ENCODE measurements at regions of chr14 and their contacts with region 1.

Region 1: DNA sequence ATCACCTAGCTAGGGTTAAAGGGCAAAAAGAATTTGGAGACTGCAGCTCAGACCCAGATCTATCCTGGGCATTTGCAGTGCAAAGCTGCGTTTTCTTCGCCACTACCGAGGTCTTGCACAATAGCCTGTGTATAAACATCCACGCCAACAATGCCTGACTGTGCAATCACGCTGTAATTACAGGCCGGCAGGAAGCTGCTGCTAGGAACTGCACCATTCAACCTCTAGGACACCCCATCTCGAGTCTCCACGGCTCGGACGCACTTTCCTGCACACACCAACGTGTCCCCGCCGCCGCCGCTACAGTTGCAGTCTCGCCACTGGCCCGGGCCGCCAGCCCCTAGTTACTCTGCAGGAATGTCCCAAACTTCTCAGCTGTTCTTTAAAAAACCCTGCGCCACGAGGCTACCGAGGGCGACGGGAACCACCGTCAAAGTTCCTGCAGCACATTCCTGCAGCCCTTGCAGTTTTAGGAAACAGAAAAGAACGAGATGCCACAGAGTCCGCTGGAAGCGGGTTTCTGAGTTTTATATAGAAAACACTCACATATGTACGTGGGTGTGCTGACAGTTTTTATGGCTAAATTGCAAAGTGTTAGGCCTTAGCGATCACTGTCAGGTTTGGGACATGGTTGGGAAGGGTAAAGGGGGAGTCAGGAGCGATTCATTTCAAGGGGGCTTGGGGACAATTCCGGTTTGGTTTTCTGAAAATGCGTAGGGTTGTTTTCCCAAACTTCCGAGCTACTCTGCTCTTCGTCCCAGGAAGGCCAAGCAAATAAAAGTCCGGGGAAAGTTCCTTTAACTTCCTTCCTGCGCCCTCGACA is 65.5 kb upstream of the PTGR2 start:
- DNase-seq: peak; percentile 90

Region 2: DNA sequence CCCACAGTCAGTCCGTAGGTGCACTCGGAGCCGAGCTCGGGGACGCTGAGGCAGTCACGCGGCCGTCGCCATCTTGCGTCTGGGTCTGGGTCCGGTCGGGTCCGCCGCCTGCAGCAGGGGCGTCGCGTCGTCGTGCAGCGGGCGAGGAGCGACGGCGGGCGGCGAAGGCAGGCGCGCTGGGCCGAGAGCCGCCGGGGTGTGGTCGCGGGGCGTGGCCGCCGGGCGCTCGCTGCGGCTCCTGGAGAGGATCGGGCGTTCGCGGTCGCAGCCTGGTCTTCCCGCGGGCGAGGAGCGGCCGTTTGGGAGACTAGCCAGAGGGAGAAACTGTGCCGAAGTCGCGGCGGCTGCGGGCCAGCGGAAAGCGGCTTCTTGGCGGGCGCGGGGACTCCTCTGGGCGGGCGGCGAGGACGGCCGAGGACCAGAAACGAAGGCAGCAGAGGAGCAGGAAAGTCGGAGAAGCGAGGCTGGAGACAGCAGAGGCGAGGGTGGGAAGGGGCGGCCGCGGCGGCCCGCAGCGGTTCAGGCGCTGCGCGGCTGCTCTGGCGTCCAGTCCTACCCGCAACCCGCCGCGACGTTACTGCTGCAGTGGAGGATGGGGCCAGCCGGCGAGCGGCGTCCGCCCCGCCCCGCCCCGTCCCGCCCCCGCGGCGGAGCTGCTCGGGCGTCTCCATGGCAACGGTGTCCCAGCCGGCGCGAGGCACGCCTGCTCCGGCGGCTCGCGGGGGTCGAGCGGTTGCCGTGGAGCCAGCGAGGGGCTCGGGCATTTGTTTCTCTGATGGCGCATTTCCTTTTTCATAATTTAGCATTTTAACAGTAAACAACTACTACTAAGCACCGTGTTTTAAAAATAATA is 72.1 kb before region 1 on chr14 and contains the start of gene PNMA1:
- intact Hi-C with region 1: loop called (anchors 5 kb)
- DNase-seq: peak; percentile 94
- total RNA-seq, gene PNMA1: 45.9 TPM

Region 3: GRCh38 chr14:73753959-73754882 is 31.9 kb before region 1 on chr14:
- intact Hi-C with region 1: loop called (anchors 5 kb)
- DNase-seq: no peak

Region 4: GRCh38 chr14:73759714-73760597 is 26.1 kb before region 1 on chr14:
- intact Hi-C with region 1: loop called (anchors 1 kb)
- DNase-seq: peak; percentile 99

Region 5: GRCh38 chr14:73825551-73826188 is 39.6 kb after region 1 on chr14:
- intact Hi-C with region 1: loop called (anchors 5 kb)
- DNase-seq: peak; percentile 94

Region 6: GRCh38 chr14:74084277-74085046 is 298.4 kb after region 1 on chr14 and contains the starts of genes ALDH6A1 and LIN52:
- intact Hi-C with region 1: no loop called
- DNase-seq: peak; percentile 99
- total RNA-seq, gene ALDH6A1: 67.8 TPM
- total RNA-seq, gene LIN52: 7.4 TPM

Measured in cardiac septum (tissue), 1 donor.